Ascending aorta (tissue), 2 donors: ENCODE measurements at regions of chr11 and their contacts with region 1.

Region 1: DNA sequence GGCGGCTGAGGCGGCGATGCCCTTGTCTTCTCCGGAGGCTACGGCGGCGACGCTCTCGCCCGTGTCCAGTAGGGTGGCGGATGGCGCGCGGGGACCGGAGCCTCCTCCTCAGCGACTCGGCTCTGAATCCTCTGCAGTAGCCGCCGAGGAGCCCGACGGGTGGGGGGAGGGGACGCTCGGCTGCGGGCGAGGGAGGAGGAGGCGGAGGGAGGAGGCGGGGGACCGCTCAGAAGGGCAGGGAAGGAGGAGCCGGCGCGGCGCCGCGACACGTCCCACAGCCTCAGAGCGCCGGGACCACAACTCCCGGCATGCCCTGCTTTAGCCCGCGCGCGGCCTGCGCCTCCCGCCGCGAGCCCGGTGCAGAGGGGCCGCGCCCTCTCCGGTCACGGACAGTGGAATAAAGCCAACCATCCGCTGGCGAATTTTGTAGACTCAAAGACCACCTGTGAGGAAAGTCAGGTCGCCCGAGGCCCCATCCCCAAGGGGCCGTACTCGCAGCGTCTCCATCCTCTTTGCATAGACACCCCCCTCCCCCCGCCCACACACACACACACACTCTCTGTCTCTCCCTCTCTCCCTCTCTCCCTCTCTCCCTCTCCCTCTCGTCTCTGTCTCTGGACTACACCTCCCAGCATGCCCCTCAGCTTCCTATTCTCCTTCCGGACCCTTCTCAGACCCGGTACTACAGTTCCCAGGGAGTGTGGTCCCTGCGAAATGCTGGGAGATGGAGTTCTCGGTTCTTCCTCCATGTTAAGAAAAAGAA is at the start of gene FAM168A:
- DNase-seq: peak; percentile 76 to 96
- H3K4me3 ChIP-seq: peak within 1 kb of the TSS; percentile 79 to 86
- H3K27ac ChIP-seq: peak within 1 kb of the TSS; percentile 68 to 81
- H3K4me1 ChIP-seq: peaks cover 0 to 10% of the 10 kb centered on the region in 2 donors
- H3K27me3 ChIP-seq: no peaks in the 10 kb centered on the region
- CTCF ChIP-seq: peak in 2 of 3 experiments; percentile 33 to 38
- total RNA-seq, gene FAM168A: 44.1 TPM

Region 2: GRCh38 chr11:73647459-73648100 is 49.4 kb after region 1 on chr11:
- intact Hi-C with region 1: loop called (anchors 1 kb)
- DNase-seq: peak; percentile 80 to 94
- H3K4me3 ChIP-seq: peak overlapping the region; percentile 42 to 53
- H3K27ac ChIP-seq: no peak overlapping the region
- H3K4me1 ChIP-seq: no peaks in the 10 kb centered on the region
- H3K27me3 ChIP-seq: no peaks in the 10 kb centered on the region
- CTCF ChIP-seq: no peak

Region 3: DNA sequence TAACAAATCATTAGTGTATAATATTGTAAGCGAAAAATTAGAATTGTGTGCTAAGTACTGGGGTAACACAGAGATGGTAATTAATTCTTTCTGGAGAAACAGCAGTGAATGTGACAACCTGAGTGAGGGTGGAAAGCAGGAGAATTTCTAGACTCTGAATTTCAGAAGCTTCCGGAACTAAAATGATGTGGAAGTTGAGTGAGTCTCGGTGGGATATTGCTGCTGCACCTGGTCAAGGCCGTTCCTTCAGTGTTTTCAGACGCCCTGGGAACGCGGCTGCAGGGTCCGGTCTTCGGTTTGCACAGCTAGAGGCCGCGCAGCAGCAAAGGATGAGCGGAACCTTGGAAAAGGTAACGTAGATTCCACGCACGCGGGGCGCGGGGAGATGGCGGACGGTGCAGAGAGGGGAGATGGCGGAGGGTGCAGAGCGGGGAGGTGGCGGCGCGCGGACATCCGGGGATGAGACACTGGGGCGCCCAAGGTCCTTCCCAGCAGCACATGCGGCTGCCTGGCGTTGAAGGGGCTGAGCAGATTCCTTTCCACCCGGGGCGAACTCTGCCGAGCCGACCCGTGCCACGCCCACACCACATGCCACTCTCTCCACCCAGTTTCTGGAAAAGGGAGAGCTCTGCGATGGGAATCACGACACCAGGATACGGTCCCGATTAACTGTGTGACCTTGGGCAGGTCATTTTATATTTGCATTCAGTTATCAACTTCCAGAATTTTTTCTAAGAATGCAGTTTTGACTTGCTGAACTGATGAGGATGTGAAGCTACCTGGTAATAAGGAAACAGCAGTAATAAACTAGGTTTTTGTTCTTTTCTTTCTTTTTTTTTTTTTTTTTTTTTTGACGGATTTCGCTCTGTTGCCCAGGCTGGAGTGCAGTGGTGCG is 189.8 kb after region 1 on chr11 and contains the start of gene MRPL48:
- intact Hi-C with region 1: loop called (anchors 5 kb)
- DNase-seq: peak; percentile 36 to 93
- H3K4me3 ChIP-seq: peak within 1 kb of the TSS; percentile 67 to 83
- H3K27ac ChIP-seq: peak within 1 kb of the TSS; percentile 71 to 83
- H3K4me1 ChIP-seq: peaks cover 0 to 12% of the 10 kb centered on the region in 2 donors
- H3K27me3 ChIP-seq: no peaks in the 10 kb centered on the region
- CTCF ChIP-seq: no peak
- total RNA-seq, gene MRPL48: not detected

Region 4: GRCh38 chr11:73982969-73983740 is 385.0 kb after region 1 on chr11:
- intact Hi-C with region 1: loop called (anchors 5 kb)
- DNase-seq: peak; percentile 82 to 97
- H3K4me3 ChIP-seq: peak overlapping the region; percentile 61 to 74
- H3K27ac ChIP-seq: peak overlapping the region; percentile 84 to 89
- H3K4me1 ChIP-seq: peaks cover 5 to 15% of the 10 kb centered on the region in 2 donors
- H3K27me3 ChIP-seq: no peaks in the 10 kb centered on the region
- CTCF ChIP-seq: no peak